ENCODE measurements at regions of chr6 and their contacts with region 1.

Region 1: DNA sequence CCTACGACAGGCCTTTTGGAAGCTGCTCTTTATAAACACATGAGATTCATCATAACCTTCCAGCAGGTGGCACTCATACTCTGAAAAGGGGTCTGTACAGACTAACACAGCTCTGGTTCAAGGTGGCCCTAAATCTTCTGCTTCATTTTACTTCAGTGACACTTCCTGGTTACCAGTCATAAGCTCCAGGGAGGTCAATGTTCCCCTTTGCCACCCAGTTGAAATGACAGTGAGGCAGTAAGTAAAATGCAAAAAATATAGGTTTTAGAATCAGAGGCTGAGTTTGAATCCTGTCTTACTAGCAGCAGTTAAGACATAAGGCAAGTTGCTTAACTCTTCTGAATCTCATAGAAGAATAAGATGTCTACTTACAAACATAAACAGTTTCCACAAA is 132.8 kb downstream of the CDK19 start:
- DNase-seq: peak; percentile 83
- H3K4me3 Mint-ChIP-seq: no peak overlapping the region
- H3K27ac Mint-ChIP-seq: no peak overlapping the region
- H3K4me1 Mint-ChIP-seq: peaks cover 10% of the 10 kb centered on the region
- H3K27me3 Mint-ChIP-seq: no peaks in the 10 kb centered on the region

Region 2: DNA sequence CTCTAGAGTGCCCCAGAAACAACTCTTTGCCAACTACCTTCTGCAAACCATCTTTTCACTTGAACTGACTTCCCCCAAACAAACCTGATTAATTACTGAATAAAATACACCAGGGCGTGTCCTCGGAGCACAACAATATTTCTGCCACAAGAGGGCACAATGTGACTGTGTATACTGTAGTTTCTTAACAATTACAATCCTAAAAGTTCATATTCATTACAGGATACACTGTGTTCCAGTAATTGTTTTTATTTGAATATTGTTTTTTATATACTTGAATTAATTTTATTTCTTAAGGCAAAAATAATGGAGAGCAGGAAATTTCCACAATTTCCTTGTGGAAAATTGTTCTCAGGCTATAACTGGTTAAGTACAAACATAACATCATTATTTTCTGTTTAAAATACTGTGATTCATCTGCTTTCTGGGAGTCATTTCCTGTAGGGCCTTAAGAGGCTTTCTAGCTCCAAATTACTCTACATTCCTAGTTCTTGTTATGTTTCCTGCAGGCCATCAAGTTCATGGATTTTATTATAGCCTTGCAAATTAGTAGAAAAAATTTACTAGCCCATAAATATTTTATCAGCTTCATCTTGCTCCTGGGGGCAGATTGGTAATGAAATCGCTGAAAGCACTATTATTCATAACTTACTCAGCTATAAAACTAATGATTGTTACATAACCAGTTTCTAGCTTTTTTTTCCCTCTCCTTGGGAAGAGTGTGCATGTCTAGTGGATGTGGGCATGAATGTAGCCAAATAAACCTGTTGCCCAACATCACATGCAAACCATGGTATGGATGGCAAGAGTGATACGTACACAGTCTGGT is 154.1 kb before region 1 on chr6:
- CTCF ChIA-PET with region 1: interaction called, 5 read pairs
- intact Hi-C with region 1: loop called (anchors 1 kb)
- DNase-seq: peak; percentile 75
- H3K4me3 Mint-ChIP-seq: no peak overlapping the region
- H3K27ac Mint-ChIP-seq: no peak overlapping the region
- H3K4me1 Mint-ChIP-seq: no peaks in the 10 kb centered on the region
- H3K27me3 Mint-ChIP-seq: no peaks in the 10 kb centered on the region

Region 3: DNA sequence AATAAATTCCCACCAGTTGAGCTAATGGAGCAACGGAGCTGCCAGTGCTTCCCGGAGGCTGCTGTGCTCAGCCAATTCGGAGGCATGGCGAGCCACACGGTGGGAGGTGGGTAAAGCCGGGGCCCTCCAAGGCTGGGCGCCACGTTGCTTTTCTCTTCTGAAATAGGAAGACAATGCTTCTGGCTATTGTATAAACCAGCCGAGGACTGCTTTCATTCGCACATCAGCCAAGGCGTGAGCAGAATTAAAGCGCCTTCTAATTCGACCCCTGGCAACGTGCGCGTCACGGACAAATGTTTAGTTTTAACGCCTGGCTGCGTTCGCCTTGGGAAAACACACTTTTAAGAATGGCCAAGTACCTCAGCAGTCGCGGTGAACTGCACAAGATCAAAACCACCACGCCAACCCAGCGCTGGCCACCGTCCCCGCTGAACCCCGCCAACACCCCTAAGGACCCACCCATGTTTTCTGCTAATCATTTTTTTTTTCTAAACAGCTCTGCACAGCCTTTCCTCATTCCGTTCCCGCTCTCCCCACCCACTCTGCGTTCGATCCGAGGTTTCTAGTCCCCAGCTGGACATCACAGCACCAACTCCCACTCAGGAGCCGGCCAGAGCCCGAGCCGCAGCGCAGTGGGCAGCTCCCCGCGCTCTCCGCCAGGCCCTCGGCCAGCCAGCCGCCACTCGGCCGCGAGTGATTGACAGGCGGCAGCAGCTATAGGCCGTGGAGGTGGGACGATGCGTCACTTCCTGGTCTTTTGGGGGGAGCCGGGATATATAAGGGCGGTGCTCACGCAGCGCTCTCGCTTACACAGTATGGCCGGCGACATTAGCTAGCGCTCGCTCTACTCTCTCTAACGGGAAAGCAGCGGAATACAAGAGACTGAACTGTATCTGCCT is 191.8 kb after region 1 on chr6 and contains the start of gene AMD1:
- CTCF ChIA-PET with region 1: interaction called, 14 read pairs
- intact Hi-C with region 1: loop called (anchors 1 kb)
- DNase-seq: peak; percentile 94
- H3K4me3 Mint-ChIP-seq: peak within 1 kb of the TSS; percentile 95
- H3K27ac Mint-ChIP-seq: peak within 1 kb of the TSS; percentile 95
- H3K4me1 Mint-ChIP-seq: peaks cover 29% of the 10 kb centered on the region
- H3K27me3 Mint-ChIP-seq: no peaks in the 10 kb centered on the region
- total RNA-seq, gene AMD1: 72.6 to 75.3 TPM

Region 4: DNA sequence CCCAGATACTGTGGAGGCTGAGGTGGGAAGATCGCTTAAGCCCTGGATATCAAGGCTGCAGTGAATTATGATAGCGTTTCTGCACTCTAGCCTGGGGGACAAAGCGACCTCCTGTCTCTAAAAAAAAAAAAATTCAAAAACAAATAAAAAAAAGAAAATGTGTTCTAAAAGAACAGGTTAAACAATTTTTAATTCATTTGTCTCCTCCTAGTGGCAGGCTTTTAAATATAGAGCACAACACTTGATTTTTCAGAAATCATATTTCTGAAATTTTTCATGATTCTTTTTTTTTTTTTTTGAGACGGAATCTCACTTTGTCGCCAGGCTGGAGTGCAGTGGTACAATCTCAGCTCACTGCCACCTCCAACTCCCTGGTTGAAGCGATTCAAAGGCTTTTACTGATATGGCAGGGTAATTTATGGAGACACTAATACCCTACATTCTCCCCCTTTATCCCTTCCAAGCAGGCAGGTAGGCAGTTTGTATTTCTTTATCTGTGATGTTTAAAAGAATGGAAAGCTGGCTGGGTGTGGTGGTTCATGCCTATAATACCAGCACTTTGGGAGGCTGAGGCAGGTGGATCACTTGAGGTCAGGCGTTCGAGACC is 267.3 kb after region 1 on chr6:
- CTCF ChIA-PET with region 1: interaction called, 48 read pairs
- intact Hi-C with region 1: loop called (anchors 1 kb)
- DNase-seq: no peak
- H3K4me3 Mint-ChIP-seq: no peak overlapping the region
- H3K27ac Mint-ChIP-seq: no peak overlapping the region
- H3K4me1 Mint-ChIP-seq: peaks cover 2% of the 10 kb centered on the region
- H3K27me3 Mint-ChIP-seq: no peaks in the 10 kb centered on the region

Region 5: GRCh38 chr6:110981202-110981600 is 298.7 kb after region 1 on chr6:
- CTCF ChIA-PET with region 1: interaction called, 12 read pairs
- intact Hi-C with region 1: loop called (anchors 1 kb)
- DNase-seq: no peak
- H3K4me3 Mint-ChIP-seq: peak overlapping the region; percentile 96
- H3K27ac Mint-ChIP-seq: peak overlapping the region; percentile 96
- H3K4me1 Mint-ChIP-seq: peaks cover 38% of the 10 kb centered on the region
- H3K27me3 Mint-ChIP-seq: no peaks in the 10 kb centered on the region

Region 6: DNA sequence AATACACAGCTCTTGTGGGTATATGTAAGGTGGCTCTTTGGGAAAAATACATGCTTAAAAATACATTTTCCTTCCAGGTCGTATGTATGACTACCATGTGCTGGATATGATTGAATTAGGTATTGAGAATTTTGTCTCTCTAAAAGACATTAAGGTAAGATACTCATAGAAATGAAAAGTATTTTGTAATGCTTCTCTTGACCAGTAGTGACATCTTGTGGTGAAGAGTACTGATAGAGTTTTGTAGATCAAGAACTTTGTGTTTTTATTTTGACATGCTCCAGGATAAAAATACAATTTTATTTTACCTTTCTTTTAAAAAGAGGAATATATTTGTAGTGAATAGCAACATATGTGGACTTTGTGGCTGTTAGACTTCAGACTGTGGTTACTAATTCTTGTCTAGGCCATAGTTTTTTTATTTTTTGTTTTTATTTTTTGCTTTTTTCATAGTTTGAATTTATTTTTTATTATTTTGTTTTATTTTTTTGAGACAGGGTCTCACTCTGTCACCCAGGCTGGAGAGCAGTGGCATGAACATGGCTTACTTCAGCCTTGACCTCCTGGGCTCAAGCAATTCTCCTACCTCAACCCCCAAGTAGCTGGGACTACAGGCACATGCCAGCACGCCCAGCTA is 317.3 kb after region 1 on chr6:
- CTCF ChIA-PET with region 1: no interaction called
- intact Hi-C with region 1: loop called (anchors 1 kb)
- DNase-seq: no peak
- H3K4me3 Mint-ChIP-seq: no peak overlapping the region
- H3K27ac Mint-ChIP-seq: no peak overlapping the region
- H3K4me1 Mint-ChIP-seq: peaks cover 2% of the 10 kb centered on the region
- H3K27me3 Mint-ChIP-seq: no peaks in the 10 kb centered on the region

Measured in activated naive CD4-positive, alpha-beta T cell treated with anti-CD3 and anti-CD28 coated beads for 36 hours (primary cell).